AG04450 (cell line): ENCODE measurements at regions of chr17 and their contacts with region 1.

Region 1: DNA sequence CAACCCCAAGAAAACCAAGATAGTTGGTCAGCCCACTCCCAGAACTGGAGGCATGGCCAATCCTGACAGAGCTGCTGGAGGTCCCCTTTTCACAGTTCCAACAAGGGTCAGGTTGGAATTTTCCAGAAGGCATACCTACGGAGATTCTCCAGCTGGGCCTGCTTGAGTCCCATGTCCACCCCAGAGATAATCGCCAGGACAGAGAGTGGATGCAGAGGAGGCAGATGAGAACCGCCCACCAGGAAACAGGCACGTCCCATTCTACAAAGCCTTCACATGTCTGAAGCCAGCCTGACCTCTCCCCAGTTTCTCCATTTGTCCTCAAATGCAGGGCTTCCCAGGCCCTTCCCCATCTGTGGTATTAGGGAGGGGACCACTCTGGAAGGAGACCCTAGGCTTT is 47.4 kb upstream of the SMURF2 start:
- DNase-seq: no peak
- H3K4me3 ChIP-seq: no peak overlapping the region
- H3K27ac ChIP-seq: peak overlapping the region; percentile 95
- H3K27me3 ChIP-seq: no peaks in the 10 kb centered on the region
- CTCF ChIP-seq: no peak

Region 2: DNA sequence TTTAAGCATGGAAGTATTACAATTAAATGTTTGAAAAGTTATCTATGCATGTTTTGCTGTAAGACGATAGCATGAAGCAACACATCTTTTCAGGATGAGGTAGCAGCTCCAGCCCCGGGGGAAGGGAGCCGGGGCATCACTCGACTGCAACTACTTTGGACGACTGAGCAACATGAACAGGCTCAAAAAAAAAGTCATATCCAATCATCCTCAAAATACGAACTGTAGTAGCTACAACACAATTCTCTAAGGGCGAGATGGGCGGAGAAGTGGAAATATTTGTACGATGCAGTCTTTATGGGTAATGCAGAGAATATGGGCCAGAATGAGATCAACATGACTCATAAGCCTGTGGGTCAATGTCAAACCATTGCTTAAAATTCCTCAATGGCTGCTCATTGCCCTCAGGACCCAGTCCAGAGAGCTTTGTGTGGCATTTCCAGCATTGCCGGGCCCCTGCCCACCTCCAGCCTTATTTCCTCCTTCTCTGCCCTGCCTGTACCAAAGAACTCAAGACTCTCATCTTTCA is 29.7 kb before region 1 on chr17:
- CTCF ChIA-PET with region 1: no interaction called
- POLR2A ChIA-PET with region 1: interaction called, 20 read pairs
- DNase-seq: peak; percentile 97
- H3K4me3 ChIP-seq: peak overlapping the region; percentile 48
- H3K27ac ChIP-seq: peak overlapping the region; percentile 98
- H3K27me3 ChIP-seq: no peaks in the 10 kb centered on the region
- CTCF ChIP-seq: no peak

Region 3: GRCh38 chr17:64723781-64724180 is 14.3 kb after region 1 on chr17:
- CTCF ChIA-PET with region 1: no interaction called
- POLR2A ChIA-PET with region 1: interaction called, 10 read pairs
- DNase-seq: no peak
- H3K4me3 ChIP-seq: no peak overlapping the region
- H3K27ac ChIP-seq: peak overlapping the region; percentile 52
- H3K27me3 ChIP-seq: no peaks in the 10 kb centered on the region
- CTCF ChIP-seq: no peak